ENCODE measurements at regions of chr3 and their contacts with region 1.

Region 1: DNA sequence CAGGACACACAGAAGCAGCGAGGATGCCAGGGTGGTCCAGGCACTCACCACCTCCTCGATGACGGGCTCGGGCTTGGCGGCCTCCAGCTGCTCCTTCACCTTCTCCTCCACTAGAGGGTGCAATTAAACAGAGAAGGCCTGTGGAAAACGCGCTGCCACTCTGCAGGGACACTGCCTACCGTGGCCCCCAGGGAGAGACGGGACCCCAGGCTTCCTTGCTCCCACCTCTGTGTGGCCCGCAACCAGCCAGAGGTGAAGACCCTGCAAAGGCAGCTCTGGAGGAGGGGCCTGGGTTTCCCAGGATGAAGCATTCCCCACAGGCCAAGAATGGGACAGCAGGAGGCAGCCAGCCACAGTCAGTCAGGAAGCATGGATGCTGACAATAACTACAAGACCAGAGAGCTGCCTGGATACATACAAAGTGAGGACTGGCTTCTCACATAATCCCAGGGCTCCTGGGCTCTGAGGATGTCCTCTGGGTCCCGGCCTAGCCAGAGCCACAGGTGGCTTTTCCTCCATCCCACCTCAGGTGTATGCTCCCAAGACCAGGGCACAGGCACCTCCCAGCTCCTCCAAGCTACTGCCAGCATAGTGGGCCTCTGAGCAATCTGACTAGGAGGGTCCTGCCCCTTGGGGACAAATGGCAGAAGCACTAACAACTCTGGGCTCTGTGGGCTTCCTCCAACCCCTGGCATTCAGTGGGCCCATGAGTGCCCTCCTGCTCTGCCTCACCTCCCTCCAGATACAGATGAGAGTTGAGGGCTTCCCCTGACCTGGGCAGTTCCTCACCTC is 46.2 kb downstream of the PTH1R start:
- DNase-seq: peak; percentile 58
- ATAC-seq: peak; percentile 47
- H3K4me3 Mint-ChIP-seq: no peak overlapping the region
- H3K27ac Mint-ChIP-seq: peak overlapping the region; percentile 11
- H3K4me1 Mint-ChIP-seq: peaks cover 46% of the 10 kb centered on the region
- H3K27me3 Mint-ChIP-seq: no peaks in the 10 kb centered on the region

Region 2: GRCh38 chr3:46778101-46778500 is 145.7 kb before region 1 on chr3:
- CTCF ChIA-PET with region 1: no interaction called
- DNase-seq: no peak
- ATAC-seq: no peak
- H3K4me3 Mint-ChIP-seq: no peak overlapping the region
- H3K27ac Mint-ChIP-seq: no peak overlapping the region
- H3K4me1 Mint-ChIP-seq: no peaks in the 10 kb centered on the region
- H3K27me3 Mint-ChIP-seq: peaks cover 17% of the 10 kb centered on the region

Region 3: DNA sequence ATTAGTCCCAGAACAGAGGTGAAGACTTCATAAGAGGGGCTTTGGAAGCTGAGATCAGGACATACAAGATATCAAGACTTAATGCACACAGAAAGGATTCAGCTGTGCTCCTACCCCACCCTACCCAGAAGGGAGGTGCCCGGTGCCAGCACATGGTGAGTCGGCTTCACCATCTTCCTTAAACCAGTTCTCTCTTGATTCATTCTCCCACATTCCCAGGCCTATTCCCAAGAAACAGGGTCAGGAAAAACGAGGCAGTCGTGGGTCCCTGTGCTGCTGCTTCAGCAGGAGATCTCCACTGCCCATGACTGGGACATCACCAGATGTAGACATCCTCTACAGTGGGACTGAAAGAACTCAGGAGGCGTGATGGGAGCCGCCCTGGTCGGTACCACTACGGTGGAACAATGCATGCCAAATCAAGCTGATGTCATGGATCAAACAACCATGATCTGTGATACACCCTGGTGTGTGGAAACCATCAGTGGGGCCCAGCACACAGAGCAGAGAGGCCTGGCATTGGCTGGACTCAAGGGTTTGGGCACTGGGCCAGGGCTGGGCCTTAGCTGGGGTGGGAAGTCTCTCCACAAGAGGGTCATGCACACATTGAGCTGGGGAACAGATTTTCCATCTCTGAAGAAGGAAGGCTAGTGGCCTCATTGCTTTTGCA is 10.9 kb after region 1 on chr3:
- CTCF ChIA-PET with region 1: interaction called, 12 read pairs
- DNase-seq: no peak
- ATAC-seq: no peak
- H3K4me3 Mint-ChIP-seq: no peak overlapping the region
- H3K27ac Mint-ChIP-seq: peak overlapping the region; percentile 41
- H3K4me1 Mint-ChIP-seq: peaks cover 46% of the 10 kb centered on the region
- H3K27me3 Mint-ChIP-seq: no peaks in the 10 kb centered on the region

Region 4: DNA sequence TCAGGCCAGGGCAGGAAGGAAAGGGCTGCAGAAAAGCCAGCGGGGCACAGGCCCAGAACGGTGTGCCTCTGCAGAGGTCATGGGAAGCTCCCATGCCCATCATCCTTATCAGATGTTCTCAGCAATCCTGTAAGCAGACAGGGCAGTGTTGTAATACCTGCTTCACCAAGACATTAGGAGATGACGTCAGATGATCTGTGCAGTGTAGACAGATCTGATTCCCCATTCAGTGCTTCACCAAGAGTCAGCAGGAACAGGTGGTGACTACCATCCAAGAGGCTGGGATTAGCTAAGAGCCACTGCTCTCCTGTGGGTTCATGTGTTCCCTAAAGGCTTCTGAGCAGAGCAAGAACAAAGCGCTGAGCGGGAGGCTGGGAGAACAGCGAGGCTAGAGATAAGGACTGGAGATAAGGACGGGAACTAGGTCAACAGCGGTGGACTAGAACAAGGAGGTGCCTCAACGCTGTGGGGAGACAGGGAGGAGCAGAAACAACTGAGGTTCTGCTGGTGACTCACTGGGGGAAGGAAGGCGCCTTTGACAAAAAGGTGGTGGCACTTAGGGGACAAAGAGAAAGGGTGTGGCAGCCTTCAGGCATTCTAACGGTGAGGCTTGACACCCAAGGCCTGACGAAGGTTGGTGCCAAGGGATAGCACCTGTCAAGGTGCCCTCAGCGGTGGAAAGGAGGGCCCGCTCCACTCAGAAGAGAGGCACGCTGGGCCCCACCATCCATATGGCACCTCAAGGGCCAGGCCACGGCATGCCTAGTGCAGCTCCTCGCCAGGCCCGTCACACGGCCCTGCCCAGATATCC is 24.4 kb after region 1 on chr3:
- CTCF ChIA-PET with region 1: interaction called, 23 read pairs
- DNase-seq: peak; percentile 88
- ATAC-seq: peak; percentile 79
- H3K4me3 Mint-ChIP-seq: peak overlapping the region; percentile 66
- H3K27ac Mint-ChIP-seq: peak overlapping the region; percentile 97
- H3K4me1 Mint-ChIP-seq: peaks cover 76% of the 10 kb centered on the region
- H3K27me3 Mint-ChIP-seq: no peaks in the 10 kb centered on the region

Region 5: GRCh38 chr3:46998121-46998851 is 74.5 kb after region 1 on chr3:
- CTCF ChIA-PET with region 1: interaction called, 17 read pairs
- DNase-seq: peak; percentile 77
- ATAC-seq: peak; percentile 68
- H3K4me3 Mint-ChIP-seq: no peak overlapping the region
- H3K27ac Mint-ChIP-seq: peak overlapping the region; percentile 52
- H3K4me1 Mint-ChIP-seq: peaks cover 22% of the 10 kb centered on the region
- H3K27me3 Mint-ChIP-seq: no peaks in the 10 kb centered on the region

Region 6: DNA sequence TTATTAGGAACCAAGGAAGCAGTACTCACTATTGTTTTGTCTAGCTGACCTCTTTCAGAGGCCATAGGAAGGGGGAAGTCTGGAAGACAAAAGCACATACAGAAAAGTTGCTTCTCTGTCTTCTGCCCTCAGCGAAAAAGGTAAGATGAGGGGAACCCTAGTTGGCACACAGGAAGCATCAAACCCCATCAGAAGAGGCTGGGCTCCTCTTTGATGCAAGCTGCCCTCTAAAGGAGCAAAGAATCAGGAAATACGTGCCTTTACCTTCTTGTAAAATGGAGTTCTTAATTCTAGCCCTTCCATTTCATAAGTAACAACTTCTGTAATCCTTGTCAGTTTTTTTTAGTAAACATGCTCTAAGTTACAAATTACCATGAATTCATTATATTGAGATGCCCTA is 1397.2 kb after region 1 on chr3:
- CTCF ChIA-PET with region 1: no interaction called
- DNase-seq: no peak
- ATAC-seq: no peak
- H3K4me3 Mint-ChIP-seq: no peak overlapping the region
- H3K27ac Mint-ChIP-seq: no peak overlapping the region
- H3K4me1 Mint-ChIP-seq: peaks cover 5% of the 10 kb centered on the region
- H3K27me3 Mint-ChIP-seq: peaks cover 14% of the 10 kb centered on the region

Measured in activated CD8-positive, alpha-beta memory T cell treated with anti-CD3 and anti-CD28 coated beads, Interleukin-2, amount 10 ng/mL, durations not matched to agents 7 days and 5 days (primary cell).